Common myeloid progenitor, CD34-positive (primary cell): ENCODE measurements at regions of chr9 and their contacts with region 1.

Region 1: GRCh38 chr9:4241562-4241961 is 58.3 kb downstream of the GLIS3 start:
- DNase-seq: no peak
- H3K4me3 ChIP-seq: no peak overlapping the region
- H3K27ac ChIP-seq: no peak overlapping the region
- H3K4me1 ChIP-seq: peaks cover 4 to 11% (median 9%) of the 10 kb centered on the region in 4 experiments
- H3K27me3 ChIP-seq: no peaks in the 10 kb centered on the region

Region 2: GRCh38 chr9:4262735-4263141 is 21.2 kb after region 1 on chr9:
- CTCF ChIA-PET with region 1: no interaction called
- POLR2A ChIA-PET with region 1: interaction called, 11 read pairs
- DNase-seq: no peak
- H3K4me3 ChIP-seq: no peak overlapping the region
- H3K27ac ChIP-seq: no peak overlapping the region
- H3K4me1 ChIP-seq: no peaks in the 10 kb centered on the region
- H3K27me3 ChIP-seq: peaks cover 0 to 3% (median 0%) of the 10 kb centered on the region in 5 experiments